HAP-1 (cell line): ENCODE measurements at regions of chr9 and their contacts with region 1.

Region 1: DNA sequence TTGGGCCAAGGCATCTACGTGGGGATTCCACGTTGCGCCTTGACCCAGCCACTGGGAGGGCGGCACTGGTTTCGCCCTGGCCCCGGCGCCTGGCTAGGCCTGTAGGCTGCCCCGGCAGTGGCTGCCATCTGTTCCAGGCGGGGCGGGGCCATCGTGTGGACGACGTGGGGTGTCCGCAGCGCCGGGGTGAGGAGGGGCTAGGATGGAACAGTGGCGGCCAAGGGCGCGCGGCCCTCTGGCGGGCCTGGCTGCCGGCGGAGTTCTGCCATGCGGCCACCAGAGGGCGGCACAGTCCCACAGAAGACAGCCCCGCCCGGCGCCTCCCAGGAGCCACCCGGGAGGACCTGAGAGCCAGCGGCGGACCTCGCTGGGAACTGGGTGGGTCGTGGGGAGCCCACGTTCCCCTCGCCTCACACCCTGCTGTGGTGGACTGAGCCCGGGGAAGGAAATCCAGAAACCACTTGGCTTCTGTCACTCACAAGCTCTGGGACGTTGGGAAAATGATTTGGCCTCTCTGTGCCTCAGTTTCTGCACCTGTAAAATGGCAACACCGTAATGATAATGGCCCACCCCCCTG is 22.6 kb upstream of the RAPGEF1 start:
- DNase-seq: peak; percentile 69 to 91
- H3K4me3 ChIP-seq: peak overlapping the region; percentile 11; the same call in 1 of the 2 replicates
- H3K4me1 ChIP-seq: no peaks in the 10 kb centered on the region; the same call in 1 of the 2 replicates
- H3K27me3 ChIP-seq: peaks cover 22% of the 10 kb centered on the region

Region 2: DNA sequence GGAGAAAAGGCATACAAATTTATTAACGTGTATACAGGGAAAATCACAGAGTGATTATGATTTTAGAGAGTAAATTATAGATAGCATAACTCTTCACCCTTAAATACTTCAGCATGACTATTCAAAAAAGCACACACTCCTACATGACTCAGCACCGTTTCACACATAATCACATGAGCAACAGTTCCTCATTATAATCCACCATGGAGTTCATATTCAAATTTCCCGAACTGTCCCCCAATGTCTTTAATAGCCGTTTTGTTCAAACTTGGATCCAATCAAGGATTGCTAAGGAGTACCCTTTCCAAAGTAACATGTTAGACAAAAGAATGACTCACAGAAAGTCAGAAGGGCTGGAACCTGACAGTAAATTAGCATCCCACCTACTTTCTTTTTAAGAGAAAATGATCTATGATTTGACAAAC is 54.7 kb before region 1 on chr9:
- in situ Hi-C with region 1: no loop called
- DNase-seq: peak in 1 of 2 experiments; percentile 68
- H3K4me3 ChIP-seq: no peak overlapping the region
- H3K4me1 ChIP-seq: peaks cover 46% of the 10 kb centered on the region
- H3K27me3 ChIP-seq: no peaks in the 10 kb centered on the region

Region 3: GRCh38 chr9:132250324-132251262 is 488.1 kb after region 1 on chr9:
- in situ Hi-C with region 1: loop called (anchors 5 kb)
- DNase-seq: no peak
- H3K4me3 ChIP-seq: no peak overlapping the region
- H3K4me1 ChIP-seq: no peaks in the 10 kb centered on the region
- H3K27me3 ChIP-seq: no peaks in the 10 kb centered on the region